ENCODE measurements at regions of chr12 and their contacts with region 1.

Region 1: DNA sequence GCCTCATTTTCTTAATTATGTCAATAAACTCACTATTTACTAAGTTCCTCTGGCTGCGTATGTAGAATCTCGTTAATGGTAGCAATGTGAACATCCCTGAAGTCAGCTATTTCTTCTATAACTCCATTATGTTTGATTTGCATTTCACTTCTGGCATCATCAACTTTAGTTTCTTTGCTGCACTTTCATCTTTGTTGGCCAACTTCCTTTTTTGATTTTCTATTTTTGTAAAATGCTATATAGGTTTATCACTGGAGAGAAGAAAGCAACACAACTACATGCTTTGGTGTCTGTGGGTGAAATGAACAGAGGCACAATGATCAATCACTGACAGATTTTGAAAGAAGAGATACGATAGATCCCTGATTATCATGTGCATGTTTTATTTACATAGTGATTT is 58.5 kb upstream of the ATF7IP start:
- DNase-seq: no peak
- ATAC-seq: peak; percentile 47
- H3K4me3 Mint-ChIP-seq: peak overlapping the region; percentile 44
- H3K27ac Mint-ChIP-seq: peak overlapping the region; percentile 86
- H3K4me1 Mint-ChIP-seq: peaks cover 37% of the 10 kb centered on the region
- H3K27me3 Mint-ChIP-seq: no peaks in the 10 kb centered on the region
- CTCF ChIP-seq: no peak

Region 2: GRCh38 chr12:13973996-13974395 is 333.0 kb before region 1 on chr12:
- CTCF ChIA-PET with region 1: no interaction called
- POLR2A ChIA-PET with region 1: no interaction called
- intact Hi-C with region 1: no loop called
- DNase-seq: no peak
- ATAC-seq: no peak
- H3K4me3 Mint-ChIP-seq: no peak overlapping the region
- H3K27ac Mint-ChIP-seq: no peak overlapping the region
- H3K4me1 Mint-ChIP-seq: no peaks in the 10 kb centered on the region
- H3K27me3 Mint-ChIP-seq: peaks cover 49% of the 10 kb centered on the region
- CTCF ChIP-seq: no peak

Region 3: DNA sequence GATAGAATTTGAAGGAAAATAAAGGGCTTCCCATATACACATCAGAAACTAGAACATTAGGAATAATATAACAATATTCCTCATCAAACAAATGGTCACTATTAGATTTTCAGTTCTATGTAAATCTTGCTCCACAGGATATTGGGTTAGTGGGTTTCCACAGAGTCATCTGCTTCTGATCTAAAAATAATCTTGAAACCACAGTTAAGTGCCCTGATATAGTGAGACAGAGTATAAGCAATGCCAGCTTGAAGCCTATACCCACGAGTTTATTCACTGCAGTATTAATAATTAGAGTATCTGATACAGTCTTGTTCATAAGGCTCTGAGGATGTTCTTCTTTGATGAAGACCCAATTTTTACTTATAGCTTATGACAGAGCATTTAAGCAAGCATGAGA is 16.1 kb before region 1 on chr12:
- CTCF ChIA-PET with region 1: no interaction called
- POLR2A ChIA-PET with region 1: no interaction called
- intact Hi-C with region 1: loop called (anchors 2 kb)
- DNase-seq: no peak
- ATAC-seq: peak; percentile 90
- H3K4me3 Mint-ChIP-seq: peak overlapping the region; percentile 29
- H3K27ac Mint-ChIP-seq: peak overlapping the region; percentile 78
- H3K4me1 Mint-ChIP-seq: peaks cover 41% of the 10 kb centered on the region
- H3K27me3 Mint-ChIP-seq: no peaks in the 10 kb centered on the region
- CTCF ChIP-seq: no peak

Region 4: DNA sequence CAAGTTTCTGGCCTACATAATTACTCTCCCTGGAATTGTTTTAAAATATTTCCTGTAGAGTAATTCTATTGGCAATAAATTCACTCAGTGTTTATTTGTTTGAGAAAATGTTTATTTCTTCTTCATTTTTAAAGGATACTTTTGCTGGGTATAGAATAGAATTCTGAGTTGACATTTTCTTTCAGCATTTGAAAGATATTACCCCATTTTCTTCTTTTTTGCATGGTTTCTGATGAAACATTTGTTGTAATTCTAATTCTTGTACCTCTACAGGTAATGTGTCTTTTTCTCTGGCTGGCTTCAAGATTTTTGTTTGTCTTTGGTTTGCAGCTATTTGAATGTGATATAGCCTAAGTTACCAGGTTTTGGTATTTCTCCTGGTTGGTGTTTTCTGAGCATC is 33.4 kb after region 1 on chr12:
- CTCF ChIA-PET with region 1: no interaction called
- POLR2A ChIA-PET with region 1: interaction called, 6 read pairs
- intact Hi-C with region 1: loop called (anchors 5 kb)
- DNase-seq: no peak
- ATAC-seq: no peak
- H3K4me3 Mint-ChIP-seq: no peak overlapping the region
- H3K27ac Mint-ChIP-seq: no peak overlapping the region
- H3K4me1 Mint-ChIP-seq: no peaks in the 10 kb centered on the region
- H3K27me3 Mint-ChIP-seq: no peaks in the 10 kb centered on the region
- CTCF ChIP-seq: no peak